CD4-positive, alpha-beta memory T cell (primary cell): ENCODE measurements at regions of chr15 and their contacts with region 1.

Region 1: GRCh38 chr15:85330901-85331588 is 49.4 kb upstream of the AKAP13 start:
- DNase-seq: peak; percentile 65 to 84 (median 67)
- H3K4me3 ChIP-seq: peak overlapping the region; percentile 1 to 55
- H3K4me3 Mint-ChIP-seq: peak overlapping the region; percentile 92 to 98 (median 95)
- H3K27ac ChIP-seq: peak overlapping the region; percentile 62
- H3K27ac Mint-ChIP-seq: peak overlapping the region; percentile 78 to 96 (median 95)
- H3K4me1 ChIP-seq: peaks cover 28% of the 10 kb centered on the region
- H3K4me1 Mint-ChIP-seq: peaks cover 33 to 52% (median 44%) of the 10 kb centered on the region in 4 donors
- H3K27me3 ChIP-seq: no peaks in the 10 kb centered on the region
- H3K27me3 Mint-ChIP-seq: no peaks in the 10 kb centered on the region

Region 2: DNA sequence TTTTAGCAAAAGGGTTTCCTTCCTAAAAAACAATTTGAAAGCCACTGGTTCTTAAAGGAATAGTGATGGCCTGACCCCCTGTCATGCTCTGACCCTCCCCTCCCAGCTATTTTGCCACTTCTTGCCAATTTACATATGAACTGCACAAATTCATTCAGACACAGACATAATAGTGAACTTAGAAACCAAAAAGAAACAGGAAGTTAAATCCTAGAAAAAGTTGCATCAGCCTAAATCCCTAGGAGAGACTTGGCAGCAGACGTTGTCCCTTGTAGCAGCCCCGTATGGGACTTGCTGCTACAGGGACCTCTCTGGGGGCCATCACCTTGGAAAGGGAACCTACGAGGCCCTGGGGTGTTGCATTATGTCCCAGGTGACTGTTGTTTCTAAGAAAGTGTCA is 363.7 kb before region 1 on chr15:
- CTCF ChIA-PET with region 1: no interaction called
- POLR2A ChIA-PET with region 1: no interaction called
- intact Hi-C with region 1: no loop called
- DNase-seq: no peak
- H3K4me3 ChIP-seq: no peak overlapping the region
- H3K4me3 Mint-ChIP-seq: peak overlapping the region in 1 of 8 donors; percentile 31
- H3K27ac ChIP-seq: no peak overlapping the region
- H3K27ac Mint-ChIP-seq: no peak overlapping the region
- H3K4me1 ChIP-seq: no peaks in the 10 kb centered on the region
- H3K4me1 Mint-ChIP-seq: no peaks in the 10 kb centered on the region
- H3K27me3 ChIP-seq: no peaks in the 10 kb centered on the region
- H3K27me3 Mint-ChIP-seq: peaks cover 1 to 8% of the 10 kb centered on the region in 2 donors

Region 3: GRCh38 chr15:85312486-85312885 is 18.6 kb before region 1 on chr15:
- CTCF ChIA-PET with region 1: interaction called, 59 read pairs
- POLR2A ChIA-PET with region 1: interaction called, 63 read pairs
- intact Hi-C with region 1: loop called (anchors 1 kb)
- DNase-seq: no peak
- H3K4me3 ChIP-seq: no peak overlapping the region
- H3K4me3 Mint-ChIP-seq: peak overlapping the region in 1 of 8 donors; percentile 1
- H3K27ac ChIP-seq: no peak overlapping the region
- H3K27ac Mint-ChIP-seq: peak overlapping the region in 1 of 7 donors; percentile 5
- H3K4me1 ChIP-seq: peaks cover 36% of the 10 kb centered on the region
- H3K4me1 Mint-ChIP-seq: peaks cover 29 to 47% (median 37%) of the 10 kb centered on the region in 4 donors
- H3K27me3 ChIP-seq: no peaks in the 10 kb centered on the region
- H3K27me3 Mint-ChIP-seq: no peaks in the 10 kb centered on the region

Region 4: GRCh38 chr15:85380217-85380811 is 49.3 kb after region 1 on chr15 and contains the start of gene AKAP13:
- CTCF ChIA-PET with region 1: interaction called, 26 read pairs
- POLR2A ChIA-PET with region 1: interaction called, 89 read pairs
- intact Hi-C with region 1: loop called (anchors 1 kb)
- DNase-seq: peak; percentile 92 to 98 (median 96)
- H3K4me3 ChIP-seq: peak within 1 kb of the TSS; percentile 10 to 59
- H3K4me3 Mint-ChIP-seq: peak within 1 kb of the TSS; percentile 88 to 96 (median 91)
- H3K27ac ChIP-seq: peak within 1 kb of the TSS; percentile 85
- H3K27ac Mint-ChIP-seq: peak within 1 kb of the TSS; percentile 88 to 98 (median 96)
- H3K4me1 ChIP-seq: peaks cover 59% of the 10 kb centered on the region
- H3K4me1 Mint-ChIP-seq: peaks cover 43 to 63% (median 51%) of the 10 kb centered on the region in 4 donors
- H3K27me3 ChIP-seq: no peaks in the 10 kb centered on the region
- H3K27me3 Mint-ChIP-seq: no peaks in the 10 kb centered on the region
- total RNA-seq, gene AKAP13: 300 to 319 TPM

Region 5: DNA sequence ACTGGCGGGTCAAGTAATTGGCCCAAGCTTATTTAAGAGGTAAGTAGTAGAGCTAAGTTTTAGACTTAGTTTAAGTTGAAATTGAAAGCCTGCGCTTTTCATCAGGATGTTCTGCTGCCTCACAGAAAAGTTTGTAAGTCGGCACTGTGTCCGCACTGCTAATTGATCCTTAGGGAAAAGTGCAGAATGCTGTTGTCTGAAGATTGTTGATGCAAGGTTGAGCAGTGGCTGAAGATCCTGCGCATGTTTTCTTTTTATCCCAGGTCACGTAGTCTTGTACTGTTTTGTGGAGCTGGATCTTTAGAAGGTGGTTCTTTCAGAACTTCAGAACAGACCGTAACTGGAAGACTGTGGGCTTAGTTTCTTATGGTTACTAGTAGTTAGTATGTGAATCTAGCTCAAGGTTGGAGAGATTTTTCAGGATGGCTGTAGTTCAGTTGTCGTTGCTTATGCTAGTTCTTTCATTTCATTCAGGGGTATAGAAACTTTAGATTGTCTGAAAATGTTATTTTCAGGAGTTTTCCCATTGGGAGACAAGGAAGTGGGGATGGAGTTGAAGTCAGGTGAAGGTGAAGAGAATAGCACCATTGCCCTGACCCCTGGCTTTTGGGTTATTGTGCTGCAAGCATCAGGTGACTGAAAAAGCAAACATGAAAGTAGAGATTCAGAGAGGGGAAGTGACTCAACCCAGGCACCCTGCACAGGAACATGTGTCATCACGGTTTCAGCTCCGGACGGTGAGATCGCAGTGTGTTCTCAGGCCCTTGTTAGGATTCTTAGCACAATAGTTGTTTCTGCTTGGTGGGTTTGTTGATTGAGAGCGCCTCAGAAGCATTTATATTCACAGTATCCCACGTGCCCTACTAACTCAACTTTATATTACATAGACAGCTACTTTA is 82.2 kb after region 1 on chr15:
- CTCF ChIA-PET with region 1: interaction called, 124 read pairs
- POLR2A ChIA-PET with region 1: interaction called, 53 read pairs
- intact Hi-C with region 1: loop called (anchors 1 kb)
- DNase-seq: peak; percentile 45 to 86 (median 54)
- H3K4me3 ChIP-seq: no peak overlapping the region
- H3K4me3 Mint-ChIP-seq: peak overlapping the region in 7 of 8 donors; percentile 47 to 87 (median 65)
- H3K27ac ChIP-seq: peak overlapping the region; percentile 40
- H3K27ac Mint-ChIP-seq: peak overlapping the region; percentile 78 to 96 (median 92)
- H3K4me1 ChIP-seq: peaks cover 32% of the 10 kb centered on the region
- H3K4me1 Mint-ChIP-seq: peaks cover 50 to 75% (median 58%) of the 10 kb centered on the region in 4 donors
- H3K27me3 ChIP-seq: no peaks in the 10 kb centered on the region
- H3K27me3 Mint-ChIP-seq: no peaks in the 10 kb centered on the region

Region 6: GRCh38 chr15:85504749-85505676 is 174.0 kb after region 1 on chr15:
- CTCF ChIA-PET with region 1: interaction called, 32 read pairs
- POLR2A ChIA-PET with region 1: interaction called, 3 read pairs
- intact Hi-C with region 1: loop called (anchors 1 kb)
- DNase-seq: peak; percentile 37 to 55 (median 42)
- H3K4me3 ChIP-seq: no peak overlapping the region
- H3K4me3 Mint-ChIP-seq: no peak overlapping the region
- H3K27ac ChIP-seq: no peak overlapping the region
- H3K27ac Mint-ChIP-seq: peak overlapping the region in 4 of 7 donors; percentile 9 to 75 (median 34)
- H3K4me1 ChIP-seq: peaks cover 48% of the 10 kb centered on the region
- H3K4me1 Mint-ChIP-seq: peaks cover 56 to 65% (median 60%) of the 10 kb centered on the region in 4 donors
- H3K27me3 ChIP-seq: no peaks in the 10 kb centered on the region
- H3K27me3 Mint-ChIP-seq: no peaks in the 10 kb centered on the region

Region 7: GRCh38 chr15:85707519-85708338 is 376.7 kb after region 1 on chr15:
- CTCF ChIA-PET with region 1: interaction called, 3 read pairs
- POLR2A ChIA-PET with region 1: interaction called, 5 read pairs
- intact Hi-C with region 1: loop called (anchors 5 kb)
- DNase-seq: peak in 2 of 5 donors; percentile 55 to 73
- H3K4me3 ChIP-seq: peak overlapping the region; percentile 42 to 61
- H3K4me3 Mint-ChIP-seq: peak overlapping the region; percentile 83 to 95 (median 87)
- H3K27ac ChIP-seq: peak overlapping the region; percentile 86
- H3K27ac Mint-ChIP-seq: peak overlapping the region; percentile 96 to 100 (median 97)
- H3K4me1 ChIP-seq: peaks cover 72% of the 10 kb centered on the region
- H3K4me1 Mint-ChIP-seq: peaks cover 69 to 89% (median 80%) of the 10 kb centered on the region in 4 donors
- H3K27me3 ChIP-seq: no peaks in the 10 kb centered on the region
- H3K27me3 Mint-ChIP-seq: no peaks in the 10 kb centered on the region